ENCODE measurements at regions of chrX and their contacts with region 1.

Region 1: DNA sequence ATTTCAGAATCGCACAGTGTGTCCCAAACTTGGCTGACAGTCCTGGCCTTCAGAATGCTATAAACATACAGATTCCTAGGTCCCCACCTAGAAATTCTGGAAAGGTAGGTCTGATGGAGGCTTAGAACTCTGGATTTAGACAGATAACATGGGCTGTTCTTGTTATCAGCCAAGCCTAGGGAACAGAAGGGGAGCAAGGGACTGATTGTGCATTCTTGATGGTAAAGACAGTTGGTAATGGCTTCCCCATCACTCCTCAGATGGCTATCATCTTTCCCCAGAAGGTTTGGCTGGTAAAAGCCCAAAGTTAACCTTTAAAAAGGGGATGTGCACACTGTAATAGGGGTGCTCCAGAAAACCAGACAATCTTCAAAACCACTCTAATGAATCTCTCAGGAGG is 35.7 kb downstream of the DIPK2B start:
- DNase-seq: no peak
- H3K4me3 ChIP-seq: no peak overlapping the region
- H3K27ac ChIP-seq: no peak overlapping the region
- H3K4me1 ChIP-seq: no peaks in the 10 kb centered on the region
- H3K27me3 ChIP-seq: peaks cover 8% of the 10 kb centered on the region
- CTCF ChIP-seq: no peak

Region 2: GRCh38 chrX:45134315-45134731 is 30.7 kb before region 1 on chrX:
- CTCF ChIA-PET with region 1: no interaction called
- dilution Hi-C with region 1: loop called (anchors 5 kb)
- in situ Hi-C with region 1: no loop called
- intact Hi-C with region 1: no loop called
- DNase-seq: no peak
- H3K4me3 ChIP-seq: no peak overlapping the region
- H3K27ac ChIP-seq: no peak overlapping the region
- H3K4me1 ChIP-seq: no peaks in the 10 kb centered on the region
- H3K27me3 ChIP-seq: peaks cover under 1% of the 10 kb centered on the region
- CTCF ChIP-seq: no peak